ENCODE measurements at regions of chr12 and their contacts with region 1.

Region 1: GRCh38 chr12:121128970-121129810 is 3.5 kb upstream of the P2RX7 start:
- DNase-seq: peak; percentile 58 to 98 (median 92)
- H3K4me3 ChIP-seq: peak overlapping the region in 54 of 59 donors; percentile 2 to 58 (median 34)
- H3K27ac ChIP-seq: peak overlapping the region; percentile 74 to 99 (median 97)
- H3K27me3 ChIP-seq: no peaks in the 10 kb centered on the region
- CTCF ChIP-seq: peak in 4 of 56 donors; percentile 5 to 25 (median 13)

Region 2: GRCh38 chr12:120879102-120879501 is 250.1 kb before region 1 on chr12:
- intact Hi-C with region 1: no loop called
- DNase-seq: no peak
- H3K4me3 ChIP-seq: no peak overlapping the region
- H3K27ac ChIP-seq: no peak overlapping the region
- H3K27me3 ChIP-seq: no peaks in the 10 kb centered on the region
- CTCF ChIP-seq: no peak

Region 3: GRCh38 chr12:121110211-121110940 is 18.8 kb before region 1 on chr12:
- intact Hi-C with region 1: loop called in 1 of 2 experiments (anchors 2 kb)
- DNase-seq: peak; percentile 65 to 81 (median 73)
- H3K4me3 ChIP-seq: no peak overlapping the region
- H3K27ac ChIP-seq: peak overlapping the region in 25 of 59 donors; percentile 1 to 76 (median 36)
- H3K27me3 ChIP-seq: no peaks in the 10 kb centered on the region
- CTCF ChIP-seq: peak; percentile 80 to 99 (median 96)

Region 4: GRCh38 chr12:121209624-121210572 is 80.7 kb after region 1 on chr12 and contains the start of gene P2RX4:
- intact Hi-C with region 1: loop called (anchors 2 kb)
- DNase-seq: peak; percentile 66 to 91 (median 83)
- H3K4me3 ChIP-seq: peak within 1 kb of the TSS; percentile 62 to 96 (median 81)
- H3K27ac ChIP-seq: peak within 1 kb of the TSS; percentile 68 to 98 (median 94)
- H3K27me3 ChIP-seq: no peaks in the 10 kb centered on the region
- CTCF ChIP-seq: peak in 54 of 56 donors; percentile 14 to 80 (median 52)
- total RNA-seq, gene P2RX4: 7.6 to 21.4 (median 12.6) TPM

Region 5: GRCh38 chr12:121296618-121297434 is 167.6 kb after region 1 on chr12 and contains the start of gene CAMKK2:
- intact Hi-C with region 1: no loop called
- DNase-seq: peak; percentile 57 to 91 (median 76)
- H3K4me3 ChIP-seq: peak within 1 kb of the TSS; percentile 71 to 100 (median 96)
- H3K27ac ChIP-seq: peak within 1 kb of the TSS in 58 of 59 donors; percentile 49 to 96 (median 89)
- H3K27me3 ChIP-seq: no peaks in the 10 kb centered on the region
- CTCF ChIP-seq: peak in 38 of 56 donors; percentile 9 to 46 (median 22)
- total RNA-seq, gene CAMKK2: 52.8 to 279 (median 164) TPM